ENCODE measurements at regions of chr5 and their contacts with region 1.

Region 1: GRCh38 chr5:9544502-9545135 is 1.3 kb downstream of the SEMA5A start:
- DNase-seq: peak in 1 of 2 donors; percentile 91
- H3K4me3 ChIP-seq: peak overlapping the region; percentile 65 to 95
- H3K27ac ChIP-seq: peak overlapping the region; percentile 96
- H3K4me1 ChIP-seq: peaks cover 0 to 15% of the 10 kb centered on the region in 2 donors
- H3K27me3 ChIP-seq: no peaks in the 10 kb centered on the region
- CTCF ChIP-seq: peak; percentile 77 to 95 (median 90)

Region 2: DNA sequence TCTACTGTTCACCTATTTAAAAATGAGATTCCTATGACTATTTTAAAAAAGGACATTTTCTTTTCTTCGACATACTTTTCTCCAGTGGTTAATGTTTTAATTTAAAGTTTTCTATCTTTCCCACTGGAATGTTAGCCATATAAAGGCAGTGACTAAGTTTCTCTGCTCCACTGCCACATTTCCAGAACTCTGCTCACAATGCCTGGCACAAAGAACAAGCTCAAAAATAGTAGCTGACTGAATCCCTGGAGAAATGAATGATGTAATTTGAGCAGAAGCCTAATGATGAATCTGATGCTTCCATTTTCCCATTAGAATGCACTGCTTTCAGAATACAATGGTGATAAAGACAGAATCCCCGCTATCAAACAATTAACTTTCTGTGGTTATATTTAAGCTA is 857.9 kb before region 1 on chr5:
- intact Hi-C with region 1: loop called (anchors 2 kb)
- DNase-seq: peak in 1 of 2 donors; percentile 70
- H3K4me3 ChIP-seq: peak overlapping the region in 1 of 2 donors; percentile 39
- H3K27ac ChIP-seq: peak overlapping the region; percentile 52 to 57
- H3K4me1 ChIP-seq: peaks cover 0 to 9% of the 10 kb centered on the region in 2 donors
- H3K27me3 ChIP-seq: no peaks in the 10 kb centered on the region
- CTCF ChIP-seq: no peak

Region 3: DNA sequence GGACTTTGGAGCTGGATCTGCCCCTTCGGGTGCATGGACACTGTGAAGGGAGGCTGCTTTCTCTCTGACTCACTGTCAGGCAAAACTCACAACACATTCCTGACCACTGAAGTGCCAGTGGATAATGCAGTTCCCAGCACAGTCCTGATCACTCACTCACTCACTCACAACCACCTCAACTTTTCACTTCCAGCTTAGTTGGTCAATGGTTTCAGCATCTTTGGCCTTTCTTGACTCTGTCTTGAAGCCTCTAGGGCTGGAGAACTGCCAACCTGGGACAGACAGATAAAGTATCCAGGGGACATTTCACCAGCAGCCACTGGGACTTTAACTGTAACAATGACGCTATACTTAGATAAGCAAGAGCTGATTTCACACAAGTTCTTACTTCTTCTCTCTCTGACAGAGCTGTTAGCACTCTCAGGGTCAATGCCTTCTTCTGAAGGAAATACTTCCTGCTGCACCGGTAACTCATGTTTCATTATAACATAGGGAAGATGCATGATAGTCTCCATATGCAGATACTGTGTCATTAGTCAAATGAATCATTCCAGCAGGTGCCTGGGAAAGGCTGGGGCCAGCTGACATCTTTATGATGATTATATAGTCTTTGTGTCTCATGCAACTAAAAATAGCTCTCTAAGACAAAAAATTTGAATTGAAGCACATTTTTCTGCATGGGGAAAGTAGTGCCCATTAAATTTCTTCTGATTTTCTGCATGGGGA is 497.7 kb before region 1 on chr5:
- intact Hi-C with region 1: loop called (anchors 10 kb)
- DNase-seq: peak in 1 of 2 donors; percentile 74
- H3K4me3 ChIP-seq: no peak overlapping the region
- H3K27ac ChIP-seq: peak overlapping the region; percentile 48 to 53
- H3K4me1 ChIP-seq: peaks cover 0 to 15% of the 10 kb centered on the region in 2 donors
- H3K27me3 ChIP-seq: no peaks in the 10 kb centered on the region
- CTCF ChIP-seq: no peak

Region 4: GRCh38 chr5:9265441-9266175 is 279.0 kb before region 1 on chr5:
- intact Hi-C with region 1: loop called (anchors 5 kb)
- DNase-seq: peak in 1 of 2 donors; percentile 65
- H3K4me3 ChIP-seq: peak overlapping the region in 1 of 2 donors; percentile 54
- H3K27ac ChIP-seq: peak overlapping the region; percentile 79 to 86
- H3K4me1 ChIP-seq: peaks cover 0 to 10% of the 10 kb centered on the region in 2 donors
- H3K27me3 ChIP-seq: no peaks in the 10 kb centered on the region
- CTCF ChIP-seq: no peak

Region 5: GRCh38 chr5:9361835-9362234 is 182.8 kb before region 1 on chr5:
- intact Hi-C with region 1: loop called (anchors 5 kb)
- DNase-seq: no peak
- H3K4me3 ChIP-seq: no peak overlapping the region
- H3K27ac ChIP-seq: peak overlapping the region in 1 of 2 donors; percentile 75
- H3K4me1 ChIP-seq: peaks cover 0 to 9% of the 10 kb centered on the region in 2 donors
- H3K27me3 ChIP-seq: no peaks in the 10 kb centered on the region
- CTCF ChIP-seq: peak in 2 of 3 experiments; percentile 35 to 42

Region 6: DNA sequence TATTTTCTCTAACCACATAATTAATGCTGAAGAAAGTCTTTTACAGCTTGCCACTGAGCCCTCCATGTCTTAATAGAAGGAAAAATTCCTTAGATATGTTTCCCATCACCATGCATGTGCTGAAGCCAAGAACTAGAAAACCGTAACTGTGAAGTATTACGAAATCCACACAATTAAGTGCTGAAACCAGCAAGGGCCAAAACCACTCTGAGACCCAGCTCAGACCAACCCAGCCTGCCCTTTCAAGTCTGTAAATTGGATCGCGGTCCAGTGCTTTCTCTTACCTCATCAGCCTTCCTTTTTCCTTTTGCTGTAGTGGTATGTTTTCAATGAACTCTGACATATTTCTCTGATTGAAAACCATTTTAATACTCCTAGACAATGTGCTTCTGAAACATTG is 25.1 kb before region 1 on chr5:
- intact Hi-C with region 1: no loop called
- DNase-seq: peak in 1 of 2 donors; percentile 64
- H3K4me3 ChIP-seq: no peak overlapping the region
- H3K27ac ChIP-seq: no peak overlapping the region
- H3K4me1 ChIP-seq: no peaks in the 10 kb centered on the region
- H3K27me3 ChIP-seq: no peaks in the 10 kb centered on the region
- CTCF ChIP-seq: no peak

Measured in ascending aorta (tissue), 2 donors.